Activated CD8-positive, alpha-beta T cell treated with anti-CD3 and anti-CD28 coated beads, Interleukin-2, amount 10 ng/mL, durations not matched to agents 7 days and 5 days (primary cell): ENCODE measurements at regions of chr16 and their contacts with region 1.

Region 1: GRCh38 chr16:391885-392335 is 5.1 kb upstream of the NME4 start:
- DNase-seq: peak; percentile 82
- ATAC-seq: peak; percentile 88
- H3K4me3 Mint-ChIP-seq: no peak overlapping the region
- H3K27ac Mint-ChIP-seq: peak overlapping the region; percentile 58
- H3K4me1 Mint-ChIP-seq: peaks cover 21% of the 10 kb centered on the region
- H3K27me3 Mint-ChIP-seq: peaks cover 8% of the 10 kb centered on the region

Region 2: DNA sequence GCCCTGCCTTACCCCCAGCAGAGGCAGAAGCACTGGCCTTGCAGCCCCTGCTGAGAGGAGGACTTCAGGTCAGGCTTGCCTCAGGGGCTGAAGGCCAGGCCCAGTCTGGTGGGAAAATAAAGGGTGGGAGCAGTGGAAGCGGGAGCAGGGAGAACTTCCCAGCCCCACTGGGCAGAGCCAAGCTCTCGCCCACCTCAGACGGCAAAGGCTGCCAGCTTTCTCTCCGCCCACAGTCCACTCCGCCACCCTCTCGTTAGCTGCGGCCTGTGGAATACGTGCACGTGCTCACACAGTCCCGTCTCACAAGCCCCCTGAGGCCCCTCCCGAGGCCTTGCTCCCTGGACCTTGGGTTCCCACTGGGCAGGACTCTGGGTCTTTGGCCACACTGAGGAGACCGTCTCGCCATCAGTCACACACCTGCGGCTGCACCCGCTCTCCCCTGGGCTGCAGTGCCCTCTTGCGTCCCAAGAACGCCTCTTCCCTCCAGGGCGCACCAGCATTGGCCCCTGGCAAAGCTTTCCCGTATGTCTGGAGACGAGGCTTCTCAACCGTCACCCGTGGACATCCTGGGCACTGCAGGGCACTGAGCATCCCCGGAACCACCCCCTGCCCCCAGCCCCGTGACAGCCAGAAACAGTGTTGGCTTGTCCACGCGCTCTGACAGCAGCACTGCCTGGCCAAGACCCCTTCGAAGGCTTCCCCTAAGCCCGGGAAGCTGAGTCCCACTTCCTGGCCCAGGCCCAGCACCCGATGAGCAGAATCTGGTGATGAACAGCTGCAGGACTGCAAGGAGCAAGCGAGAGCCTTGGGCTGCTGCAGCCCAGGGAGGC is 29.8 kb before region 1 on chr16:
- CTCF ChIA-PET with region 1: no interaction called
- POLR2A ChIA-PET with region 1: no interaction called
- DNase-seq: peak; percentile 82
- ATAC-seq: peak; percentile 88
- H3K4me3 Mint-ChIP-seq: no peak overlapping the region
- H3K27ac Mint-ChIP-seq: no peak overlapping the region
- H3K4me1 Mint-ChIP-seq: peaks cover 6% of the 10 kb centered on the region
- H3K27me3 Mint-ChIP-seq: no peaks in the 10 kb centered on the region

Region 3: DNA sequence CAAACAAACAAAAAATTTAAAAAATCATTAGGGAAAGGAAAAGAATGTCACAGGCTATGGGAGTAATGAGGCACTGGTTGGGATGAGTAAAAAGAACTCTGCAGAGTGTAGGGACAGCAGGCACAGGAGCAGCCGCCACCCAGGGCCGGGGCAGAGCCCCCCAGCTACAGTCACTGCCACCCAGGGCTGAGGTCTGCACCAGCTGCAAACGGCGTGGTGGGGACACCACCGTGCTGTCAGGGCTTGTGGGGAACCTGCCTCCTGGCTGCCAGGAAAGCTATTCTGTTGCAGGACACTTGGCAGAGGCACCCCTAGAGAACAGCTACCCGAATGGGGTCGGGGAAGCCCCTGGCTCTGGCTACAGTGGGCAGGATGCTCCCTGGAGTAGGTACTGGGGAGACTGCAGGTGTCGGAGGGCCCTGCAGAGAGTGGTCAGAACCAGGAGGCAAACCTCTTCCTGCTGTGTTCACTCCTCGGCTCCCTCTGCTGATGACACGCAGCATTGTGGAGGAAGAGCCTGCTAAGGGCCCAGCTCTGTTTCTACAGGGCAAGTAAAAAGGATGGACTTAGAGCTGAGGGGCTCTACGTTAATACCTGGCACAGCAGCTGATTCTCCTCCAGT is 103.3 kb after region 1 on chr16:
- CTCF ChIA-PET with region 1: interaction called, 10 read pairs
- POLR2A ChIA-PET with region 1: no interaction called
- DNase-seq: peak; percentile 63
- ATAC-seq: peak; percentile 86
- H3K4me3 Mint-ChIP-seq: no peak overlapping the region
- H3K27ac Mint-ChIP-seq: no peak overlapping the region
- H3K4me1 Mint-ChIP-seq: peaks cover 7% of the 10 kb centered on the region
- H3K27me3 Mint-ChIP-seq: no peaks in the 10 kb centered on the region